ENCODE measurements at regions of chr5 and their contacts with region 1.

Region 1: DNA sequence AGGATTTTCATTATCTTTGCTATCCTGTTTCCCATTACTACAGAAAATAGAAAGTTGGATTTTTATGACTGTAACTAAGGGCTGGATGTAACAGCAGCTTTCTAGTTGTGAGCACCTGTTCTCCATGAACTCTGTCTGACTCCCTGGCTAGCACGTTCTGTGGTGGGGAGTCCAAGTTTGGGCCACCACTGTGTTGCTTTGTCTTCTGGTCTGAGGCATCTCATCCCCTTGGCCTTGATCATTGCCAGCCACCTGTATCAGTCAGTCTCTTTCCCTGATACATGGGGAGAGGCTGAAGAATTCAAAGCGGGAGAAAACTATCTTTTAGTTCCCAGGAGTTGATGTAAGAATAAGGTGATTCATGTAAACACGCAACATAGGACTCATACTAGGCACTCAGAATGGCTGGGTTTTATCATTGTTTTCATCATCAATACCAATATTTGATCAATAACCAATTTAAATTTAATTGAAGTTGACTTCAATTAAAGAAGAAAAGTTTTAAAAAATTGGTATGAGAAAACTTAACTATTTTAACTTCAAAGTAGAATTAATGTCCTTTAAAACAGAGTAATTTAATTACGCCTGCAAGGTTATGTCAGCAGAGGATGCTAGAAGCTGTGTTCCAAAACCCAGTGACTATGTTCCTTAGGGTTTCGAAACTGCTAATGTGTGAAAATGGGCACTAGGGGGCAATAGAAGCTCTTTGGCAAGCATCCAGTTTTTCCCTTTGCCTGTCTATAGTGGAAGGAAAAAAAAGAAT is 33.6 kb downstream of the WDR70 start:
- DNase-seq: peak; percentile 83

Region 2: DNA sequence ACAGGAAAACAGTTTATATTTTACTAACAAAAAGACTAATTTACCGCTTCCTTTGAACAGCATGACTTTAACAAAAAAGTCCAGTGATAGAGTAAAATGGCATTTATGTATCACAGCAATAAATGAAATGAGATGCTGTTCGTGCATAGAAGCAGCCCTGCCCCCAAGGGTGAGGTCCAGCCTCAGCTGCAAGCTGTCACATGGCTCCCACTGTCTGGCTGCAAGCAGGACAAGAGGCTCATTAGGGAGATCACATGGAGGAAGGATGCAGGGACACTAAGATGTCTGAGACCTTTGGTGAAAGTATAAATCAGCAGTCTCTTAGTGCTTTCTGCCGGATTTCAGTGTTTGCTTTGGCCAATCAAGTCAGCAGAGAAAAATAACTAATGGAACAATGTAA is 404.2 kb after region 1 on chr5:
- in situ Hi-C with region 1: loop called (anchors 25 kb)
- DNase-seq: no peak

Region 3: GRCh38 chr5:38112938-38113337 is 700.2 kb after region 1 on chr5:
- in situ Hi-C with region 1: no loop called
- DNase-seq: no peak

Region 4: GRCh38 chr5:38193015-38193581 is 780.4 kb after region 1 on chr5:
- in situ Hi-C with region 1: loop called (anchors 25 kb)
- DNase-seq: peak; percentile 71

Measured in KBM-7 (cell line).